ENCODE measurements at regions of chr11 and their contacts with region 1.

Region 1: GRCh38 chr11:59171508-59172322 is at the start of gene DTX4:
- DNase-seq: peak; percentile 76
- H3K4me3 ChIP-seq: peak within 1 kb of the TSS; percentile 63 to 70 (median 64)
- H3K27ac ChIP-seq: peak within 1 kb of the TSS; percentile 92
- H3K4me1 ChIP-seq: peaks cover 42% of the 10 kb centered on the region
- H3K27me3 ChIP-seq: no peaks in the 10 kb centered on the region
- CTCF ChIP-seq: peak; percentile 85 to 86
- total RNA-seq, gene DTX4: 10.4 to 11.5 TPM

Region 2: DNA sequence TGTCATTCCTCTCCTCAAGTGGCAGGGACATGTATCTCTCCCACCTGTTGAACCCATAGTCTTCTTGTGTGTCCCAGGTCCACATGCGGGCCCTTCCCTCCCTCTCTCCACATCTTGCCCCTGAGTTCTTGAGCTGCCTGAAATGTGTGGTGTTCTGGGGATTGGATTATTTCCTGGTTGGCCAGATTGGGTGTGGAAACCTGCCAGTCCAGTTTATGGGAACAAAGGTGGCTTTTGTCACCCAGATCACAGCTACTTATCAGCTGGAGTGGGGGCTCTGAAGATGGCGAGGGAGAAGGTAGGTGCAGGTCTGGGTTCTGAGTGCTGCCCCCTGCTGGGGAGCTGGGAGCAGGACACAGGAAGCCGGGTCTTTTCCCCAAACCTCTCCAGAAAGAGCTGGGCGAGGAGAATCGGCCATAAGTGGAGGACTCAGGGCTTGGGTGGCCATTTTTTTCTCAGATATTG is 14.4 kb after region 1 on chr11:
- CTCF ChIA-PET with region 1: interaction called, 40 read pairs
- dilution Hi-C with region 1: no loop called
- in situ Hi-C with region 1: no loop called
- intact Hi-C with region 1: loop called (anchors 1 kb)
- DNase-seq: peak; percentile 11
- H3K4me3 ChIP-seq: no peak overlapping the region
- H3K27ac ChIP-seq: no peak overlapping the region
- H3K4me1 ChIP-seq: no peaks in the 10 kb centered on the region
- H3K27me3 ChIP-seq: no peaks in the 10 kb centered on the region
- CTCF ChIP-seq: peak; percentile 62 to 88

Region 3: GRCh38 chr11:59263225-59263894 is 91.6 kb after region 1 on chr11:
- CTCF ChIA-PET with region 1: no interaction called
- dilution Hi-C with region 1: no loop called
- in situ Hi-C with region 1: no loop called
- intact Hi-C with region 1: loop called (anchors 2 kb)
- DNase-seq: peak; percentile 16
- H3K4me3 ChIP-seq: no peak overlapping the region
- H3K27ac ChIP-seq: no peak overlapping the region
- H3K4me1 ChIP-seq: peaks cover 35% of the 10 kb centered on the region
- H3K27me3 ChIP-seq: no peaks in the 10 kb centered on the region
- CTCF ChIP-seq: peak; percentile 46 to 75

Region 4: GRCh38 chr11:59429924-59430516 is 258.3 kb after region 1 on chr11:
- CTCF ChIA-PET with region 1: no interaction called
- dilution Hi-C with region 1: no loop called
- in situ Hi-C with region 1: no loop called
- intact Hi-C with region 1: loop called (anchors 1 kb)
- DNase-seq: peak; percentile 48
- H3K4me3 ChIP-seq: no peak overlapping the region
- H3K27ac ChIP-seq: no peak overlapping the region
- H3K4me1 ChIP-seq: no peaks in the 10 kb centered on the region
- H3K27me3 ChIP-seq: peaks cover 4% of the 10 kb centered on the region
- CTCF ChIP-seq: peak; percentile 81 to 87

Region 5: DNA sequence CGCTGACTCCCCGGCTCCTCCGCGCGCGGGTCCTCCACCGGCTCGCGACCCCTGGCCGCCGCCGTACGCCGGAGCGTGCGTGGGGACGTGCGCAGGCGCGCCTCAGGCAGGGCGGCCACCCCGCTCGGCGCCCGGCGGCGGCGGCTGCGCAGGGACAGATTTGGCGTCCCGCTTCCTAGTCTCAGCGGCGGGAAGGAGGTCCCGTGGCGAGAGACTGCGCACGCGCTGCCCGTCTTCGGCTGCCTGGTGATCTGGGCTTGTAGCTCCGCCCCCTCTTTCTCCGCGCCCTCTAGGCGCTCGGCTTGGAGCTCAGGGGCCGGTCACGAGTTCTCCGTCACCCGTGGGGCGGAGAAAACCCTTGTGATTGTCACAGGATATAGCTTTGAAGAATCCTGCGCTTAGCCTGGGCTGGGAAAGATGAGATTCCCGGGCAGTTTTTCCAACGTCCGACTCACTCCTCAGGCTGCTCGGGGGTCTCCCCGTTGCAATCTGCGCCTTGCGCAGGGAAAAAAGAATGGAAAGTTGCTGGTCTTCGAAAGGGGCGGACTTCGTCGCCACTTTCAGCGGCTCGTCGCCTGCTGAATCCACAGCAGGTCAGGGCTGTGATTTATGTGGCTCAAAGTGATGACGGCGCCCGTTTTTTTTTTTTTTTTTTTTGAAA is 497.4 kb after region 1 on chr11 and contains the start of gene PATL1:
- CTCF ChIA-PET with region 1: no interaction called
- dilution Hi-C with region 1: no loop called
- in situ Hi-C with region 1: no loop called
- intact Hi-C with region 1: loop called (anchors 10 kb)
- DNase-seq: peak; percentile 97
- H3K4me3 ChIP-seq: peak within 1 kb of the TSS; percentile 70 to 90 (median 78)
- H3K27ac ChIP-seq: peak within 1 kb of the TSS; percentile 94
- H3K4me1 ChIP-seq: peaks cover 15% of the 10 kb centered on the region
- H3K27me3 ChIP-seq: no peaks in the 10 kb centered on the region
- CTCF ChIP-seq: no peak
- total RNA-seq, gene PATL1: 11.2 to 42.8 TPM

Measured in mammary epithelial cell (primary cell).